Prostate gland (tissue), 2 donors: ENCODE measurements at regions of chr6 and their contacts with region 1.

Region 1: DNA sequence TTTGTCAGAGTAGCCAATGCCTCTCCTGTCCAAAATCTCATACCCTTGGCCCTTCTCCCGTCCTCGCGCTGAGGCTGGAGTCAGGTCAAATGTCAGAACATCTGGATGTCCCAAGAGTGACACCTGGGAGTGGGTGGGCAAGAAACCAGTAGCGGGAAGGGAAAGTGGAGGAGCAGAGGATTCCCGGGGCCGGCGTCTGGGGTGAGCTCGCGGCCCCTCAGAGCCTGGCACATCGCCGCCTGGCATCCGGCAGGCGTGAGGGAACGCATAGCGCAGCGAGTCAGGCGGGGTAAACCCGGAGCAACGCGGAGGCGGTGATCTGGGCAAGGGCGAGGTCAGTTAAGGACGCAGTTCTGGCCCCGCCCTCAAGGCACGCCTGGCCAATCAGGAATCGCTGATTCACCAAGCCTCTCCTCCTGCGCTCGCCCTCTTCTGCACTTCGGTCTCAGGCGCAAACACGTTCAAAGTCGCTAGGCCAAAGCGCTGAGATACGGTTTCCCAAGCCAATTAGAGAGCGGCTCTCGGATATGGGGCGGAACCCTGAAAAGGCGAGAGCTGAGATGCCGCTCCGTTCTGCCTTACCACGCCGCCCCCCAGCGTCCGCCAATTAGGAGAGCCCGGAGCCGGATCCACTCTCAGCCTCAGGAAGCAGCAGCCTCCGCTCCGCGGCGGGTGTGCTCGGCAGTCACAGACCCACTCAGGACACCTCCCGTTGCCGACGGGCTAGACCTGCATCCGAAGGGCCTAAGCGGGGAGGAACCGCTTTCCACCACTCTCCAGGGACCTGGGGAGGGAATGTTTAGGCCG is 22.5 kb downstream of the VPS52 start:
- DNase-seq: peak; percentile 98
- H3K4me3 ChIP-seq: peak overlapping the region; percentile 41 to 44
- H3K27ac ChIP-seq: peak overlapping the region; percentile 88 to 91
- H3K4me1 ChIP-seq: no peaks in the 10 kb centered on the region
- H3K27me3 ChIP-seq: no peaks in the 10 kb centered on the region
- CTCF ChIP-seq: peak in 2 of 4 experiments; percentile 31 to 56
- POLR2A ChIP-seq: peak; percentile 78

Region 2: DNA sequence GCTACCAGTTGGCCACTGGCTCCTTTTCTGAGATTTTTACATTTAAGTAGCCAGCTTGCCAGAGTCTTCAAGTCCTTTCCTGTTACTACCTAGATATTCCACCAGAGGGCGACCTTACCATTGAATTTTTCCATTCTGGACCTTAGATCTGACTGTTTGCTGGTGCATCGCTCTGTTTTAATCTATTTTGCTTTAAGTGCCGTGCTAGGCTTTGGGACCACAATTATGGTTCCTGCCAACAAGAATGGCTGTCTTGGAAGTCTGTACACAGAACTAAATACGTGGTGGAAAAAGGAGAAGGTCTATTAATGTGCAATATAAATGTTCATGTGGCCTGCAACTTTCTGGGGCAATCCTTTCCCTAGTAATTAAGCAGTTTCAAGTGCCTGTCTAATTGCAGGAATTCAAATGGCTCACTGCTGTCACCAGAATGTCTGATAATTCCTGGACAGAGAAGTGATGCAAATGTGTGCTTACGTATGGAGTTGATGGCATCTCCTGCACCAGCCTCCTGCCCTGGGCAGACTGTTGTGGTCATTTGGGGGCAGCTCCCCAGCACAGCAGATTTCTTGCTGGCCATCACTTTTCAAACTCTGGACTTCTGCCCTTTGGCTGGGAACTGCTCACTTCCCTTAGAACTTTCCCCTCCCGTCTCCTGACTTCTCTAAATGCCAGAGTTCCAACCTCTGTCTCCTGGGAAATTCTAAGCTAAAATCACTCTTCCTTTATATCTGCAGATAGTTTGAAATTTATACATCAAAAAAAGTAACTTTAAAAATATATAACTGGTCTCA is 234.1 kb before region 1 on chr6:
- intact Hi-C with region 1: loop called (anchors 2 kb)
- DNase-seq: peak; percentile 62
- H3K4me3 ChIP-seq: no peak overlapping the region
- H3K27ac ChIP-seq: no peak overlapping the region
- H3K4me1 ChIP-seq: no peaks in the 10 kb centered on the region
- H3K27me3 ChIP-seq: no peaks in the 10 kb centered on the region
- CTCF ChIP-seq: peak; percentile 65 to 88 (median 83)
- POLR2A ChIP-seq: no peak

Region 3: DNA sequence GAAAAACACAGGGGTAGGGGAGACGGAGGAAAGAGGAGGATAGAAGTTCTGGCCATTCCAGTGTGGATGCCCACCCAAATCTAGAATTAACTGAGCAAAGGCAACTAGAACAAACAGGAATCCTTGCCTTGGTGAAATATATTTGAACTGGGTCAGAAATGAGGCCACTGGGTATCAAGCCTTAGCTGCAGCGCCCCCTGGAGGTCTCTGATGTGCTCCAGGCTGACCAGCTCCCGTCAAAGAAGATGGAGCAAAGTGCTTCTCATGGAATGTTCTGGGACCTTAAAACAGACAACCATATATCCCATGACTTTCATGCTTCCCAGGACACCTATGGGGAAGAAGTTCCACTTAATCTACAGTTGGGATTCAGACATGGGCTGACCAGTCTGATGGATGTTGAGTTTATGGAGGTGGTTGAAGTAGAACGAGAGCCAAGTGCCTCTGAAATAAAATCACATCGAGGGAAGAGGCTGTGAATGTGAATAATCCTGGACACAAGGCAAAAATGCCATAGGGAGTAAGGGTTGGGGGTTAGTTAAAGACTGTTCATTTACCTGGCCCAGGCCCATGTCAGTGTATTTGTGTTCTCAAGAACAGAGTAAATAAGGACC is 122.9 kb before region 1 on chr6:
- intact Hi-C with region 1: loop called (anchors 10 kb)
- DNase-seq: peak; percentile 52
- H3K4me3 ChIP-seq: no peak overlapping the region
- H3K27ac ChIP-seq: no peak overlapping the region
- H3K4me1 ChIP-seq: no peaks in the 10 kb centered on the region
- H3K27me3 ChIP-seq: no peaks in the 10 kb centered on the region
- CTCF ChIP-seq: peak; percentile 13 to 51 (median 43)
- POLR2A ChIP-seq: no peak

Region 4: DNA sequence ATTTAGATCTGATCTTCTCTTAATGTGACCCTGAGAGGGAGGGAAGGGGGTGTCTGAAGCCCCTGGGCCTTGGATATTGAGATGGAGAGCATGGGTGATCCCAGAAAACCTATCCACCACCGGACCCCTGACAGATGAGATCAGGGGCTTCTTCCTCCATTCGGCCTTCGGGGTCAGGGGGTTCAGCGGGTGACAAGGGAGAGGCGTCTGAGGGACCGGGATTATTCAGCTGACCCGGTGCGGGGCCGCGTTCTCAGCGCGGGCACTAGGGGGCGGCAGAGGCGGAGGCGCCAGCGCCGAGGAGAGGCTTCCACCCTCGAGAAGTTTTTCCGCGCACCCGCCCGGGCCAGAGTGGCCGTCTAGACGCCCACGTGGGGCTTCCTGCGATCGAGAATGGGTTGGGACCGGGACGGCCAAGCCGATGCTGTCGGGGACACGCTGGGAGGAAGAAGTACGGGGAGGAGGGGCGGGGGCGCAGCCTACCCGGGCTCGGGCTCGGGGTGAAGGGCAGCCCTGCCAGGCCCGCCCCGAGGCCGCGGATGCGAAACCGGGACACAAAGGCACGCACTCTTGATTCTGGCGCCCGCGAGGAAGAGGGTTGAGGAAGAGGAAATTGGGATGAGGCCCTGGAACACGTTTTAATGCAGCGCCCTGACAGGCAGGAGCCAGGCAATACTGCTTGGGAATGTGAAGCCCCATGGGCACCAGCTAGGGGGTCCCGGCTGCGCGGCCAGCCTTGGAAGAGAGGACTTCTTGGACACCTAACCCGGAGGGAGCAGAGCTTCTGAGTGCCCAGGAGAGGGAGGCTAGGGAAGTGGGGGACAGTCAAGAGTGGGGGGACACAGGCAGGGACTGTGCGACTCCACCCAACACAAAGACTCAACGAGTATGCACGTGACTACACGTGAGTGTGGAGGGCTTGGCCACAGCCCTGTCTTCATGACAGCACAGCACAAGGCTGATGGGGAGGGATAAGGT is 87.5 kb before region 1 on chr6:
- intact Hi-C with region 1: loop called (anchors 1 kb)
- DNase-seq: peak; percentile 46
- H3K4me3 ChIP-seq: peak overlapping the region; percentile 30 to 35
- H3K27ac ChIP-seq: peak overlapping the region; percentile 43 to 50
- H3K4me1 ChIP-seq: no peaks in the 10 kb centered on the region
- H3K27me3 ChIP-seq: no peaks in the 10 kb centered on the region
- CTCF ChIP-seq: peak; percentile 77 to 92 (median 82)
- POLR2A ChIP-seq: no peak

Region 5: GRCh38 chr6:33200219-33201146 is 48.6 kb before region 1 on chr6 and contains the starts of genes RXRB and SLC39A7:
- intact Hi-C with region 1: loop called (anchors 2 kb)
- DNase-seq: peak; percentile 99
- H3K4me3 ChIP-seq: peak within 1 kb of the TSS; percentile 84
- H3K27ac ChIP-seq: peak within 1 kb of the TSS; percentile 96
- H3K4me1 ChIP-seq: peaks cover 6% of the 10 kb centered on the region
- H3K27me3 ChIP-seq: no peaks in the 10 kb centered on the region
- CTCF ChIP-seq: peak in 1 of 4 experiments; percentile 4
- POLR2A ChIP-seq: peak; percentile 56
- total RNA-seq, gene RXRB: 30.6 to 40.5 TPM
- total RNA-seq, gene SLC39A7: 109 to 182 TPM

Region 6: GRCh38 chr6:33372526-33373123 is 123.5 kb after region 1 on chr6:
- intact Hi-C with region 1: no loop called
- DNase-seq: no peak
- H3K4me3 ChIP-seq: no peak overlapping the region
- H3K27ac ChIP-seq: peak overlapping the region; percentile 41 to 76
- H3K4me1 ChIP-seq: peaks cover 18% of the 10 kb centered on the region
- H3K27me3 ChIP-seq: no peaks in the 10 kb centered on the region
- CTCF ChIP-seq: no peak
- POLR2A ChIP-seq: no peak

Region 7: GRCh38 chr6:33391278-33391921 is 142.3 kb after region 1 on chr6 and contains the start of gene KIFC1:
- intact Hi-C with region 1: no loop called
- DNase-seq: peak; percentile 99
- H3K4me3 ChIP-seq: peak within 1 kb of the TSS; percentile 25 to 41
- H3K27ac ChIP-seq: peak within 1 kb of the TSS; percentile 92
- H3K4me1 ChIP-seq: no peaks in the 10 kb centered on the region
- H3K27me3 ChIP-seq: no peaks in the 10 kb centered on the region
- CTCF ChIP-seq: peak; percentile 97 to 99 (median 99)
- POLR2A ChIP-seq: peak; percentile 40
- total RNA-seq, gene KIFC1: 5.8 to 6.5 TPM